ENCODE measurements at regions of chr12 and their contacts with region 1.

Region 1: DNA sequence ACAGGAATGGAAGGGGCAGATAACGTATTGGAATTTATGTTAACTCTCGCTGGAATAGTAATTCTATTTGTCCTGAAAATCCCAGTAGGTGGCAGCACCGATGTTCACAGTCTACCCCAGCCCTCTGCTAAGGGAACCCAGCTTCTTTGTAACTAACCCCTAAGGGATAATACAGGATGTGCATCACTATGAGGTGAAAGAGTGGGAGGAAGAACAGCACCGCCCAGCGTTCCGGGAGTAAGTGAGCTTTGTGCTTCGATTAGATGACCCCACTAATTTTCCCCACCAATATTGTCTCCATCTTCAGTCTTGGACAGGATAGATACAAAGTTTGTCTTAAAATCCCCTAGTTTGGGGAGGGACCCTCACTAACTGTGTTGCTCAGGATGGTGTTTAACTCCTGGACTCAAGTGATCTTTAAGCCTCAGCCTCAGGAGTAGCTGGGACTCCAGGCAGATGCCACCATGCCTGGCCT is 2.7 kb downstream of the SLC2A3 start:
- DNase-seq: peak; percentile 78
- H3K4me3 Mint-ChIP-seq: no peak overlapping the region
- H3K27ac Mint-ChIP-seq: no peak overlapping the region
- H3K4me1 Mint-ChIP-seq: no peaks in the 10 kb centered on the region
- H3K27me3 Mint-ChIP-seq: peaks cover 18% of the 10 kb centered on the region
- CTCF ChIP-seq: peak; percentile 19

Region 2: GRCh38 chr12:7628381-7628961 is 304.8 kb before region 1 on chr12:
- CTCF ChIA-PET with region 1: no interaction called
- intact Hi-C with region 1: no loop called
- DNase-seq: no peak
- H3K4me3 Mint-ChIP-seq: no peak overlapping the region
- H3K27ac Mint-ChIP-seq: no peak overlapping the region
- H3K4me1 Mint-ChIP-seq: no peaks in the 10 kb centered on the region
- H3K27me3 Mint-ChIP-seq: no peaks in the 10 kb centered on the region
- CTCF ChIP-seq: no peak

Region 3: DNA sequence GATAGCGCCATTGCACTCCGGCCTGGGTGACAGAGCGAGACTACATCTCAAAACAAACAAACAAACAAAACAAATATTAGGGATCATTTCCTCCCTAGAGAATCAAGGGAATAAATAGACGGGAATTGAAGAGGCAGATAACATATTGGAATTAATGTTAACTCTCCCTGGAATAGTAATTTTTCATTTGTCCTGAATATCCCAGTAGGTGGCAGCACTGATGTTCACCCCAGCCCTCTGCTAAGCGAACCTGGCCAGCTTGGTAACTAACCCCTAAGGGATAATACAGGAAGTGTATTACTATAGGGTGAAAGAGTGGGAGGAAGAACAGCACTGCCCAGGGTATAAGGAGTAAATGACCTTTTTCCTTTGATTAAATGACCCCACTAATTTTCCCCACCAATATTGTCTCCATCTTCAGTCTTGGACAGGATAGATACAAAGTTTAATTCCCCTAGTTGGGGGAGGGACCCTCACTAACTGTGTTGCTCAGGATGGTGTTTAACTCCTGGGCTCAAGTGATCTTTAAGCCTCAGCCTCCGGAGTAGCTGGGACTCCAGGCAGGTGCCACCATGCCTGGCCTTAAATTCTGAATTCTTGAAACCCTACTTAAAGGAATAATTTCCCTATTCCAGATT is 101.1 kb before region 1 on chr12:
- CTCF ChIA-PET with region 1: interaction called, 15 read pairs
- intact Hi-C with region 1: no loop called
- DNase-seq: peak; percentile 46
- H3K4me3 Mint-ChIP-seq: no peak overlapping the region
- H3K27ac Mint-ChIP-seq: no peak overlapping the region
- H3K4me1 Mint-ChIP-seq: no peaks in the 10 kb centered on the region
- H3K27me3 Mint-ChIP-seq: peaks cover 27% of the 10 kb centered on the region
- CTCF ChIP-seq: no peak

Region 4: GRCh38 chr12:7859552-7859951 is 73.7 kb before region 1 on chr12:
- CTCF ChIA-PET with region 1: interaction called, 34 read pairs
- intact Hi-C with region 1: loop called (anchors 2 kb)
- DNase-seq: no peak
- H3K4me3 Mint-ChIP-seq: no peak overlapping the region
- H3K27ac Mint-ChIP-seq: no peak overlapping the region
- H3K4me1 Mint-ChIP-seq: peaks cover 8% of the 10 kb centered on the region
- H3K27me3 Mint-ChIP-seq: peaks cover 37% of the 10 kb centered on the region
- CTCF ChIP-seq: no peak

Region 5: DNA sequence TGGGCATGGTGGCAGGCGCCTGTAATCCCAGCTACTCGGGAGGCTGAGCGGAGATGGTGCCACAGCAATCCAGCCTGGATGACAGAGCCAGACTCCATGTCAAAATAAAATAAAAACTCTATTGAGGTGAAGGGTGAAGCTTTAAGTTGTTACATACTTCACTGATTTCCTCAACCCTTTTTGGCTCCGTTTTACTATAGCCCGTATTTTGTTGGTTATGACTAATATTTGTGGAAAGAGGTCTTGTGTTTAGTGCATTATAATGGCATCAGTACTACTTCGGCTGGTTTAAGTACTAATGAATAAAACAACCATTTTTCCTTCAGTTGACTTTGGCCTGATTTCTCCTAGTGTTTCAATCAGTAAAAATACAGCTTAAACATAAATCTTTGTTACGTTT is 33.5 kb before region 1 on chr12:
- CTCF ChIA-PET with region 1: no interaction called
- intact Hi-C with region 1: loop called (anchors 5 kb)
- DNase-seq: no peak
- H3K4me3 Mint-ChIP-seq: no peak overlapping the region
- H3K27ac Mint-ChIP-seq: no peak overlapping the region
- H3K4me1 Mint-ChIP-seq: no peaks in the 10 kb centered on the region
- H3K27me3 Mint-ChIP-seq: no peaks in the 10 kb centered on the region
- CTCF ChIP-seq: no peak

Region 6: DNA sequence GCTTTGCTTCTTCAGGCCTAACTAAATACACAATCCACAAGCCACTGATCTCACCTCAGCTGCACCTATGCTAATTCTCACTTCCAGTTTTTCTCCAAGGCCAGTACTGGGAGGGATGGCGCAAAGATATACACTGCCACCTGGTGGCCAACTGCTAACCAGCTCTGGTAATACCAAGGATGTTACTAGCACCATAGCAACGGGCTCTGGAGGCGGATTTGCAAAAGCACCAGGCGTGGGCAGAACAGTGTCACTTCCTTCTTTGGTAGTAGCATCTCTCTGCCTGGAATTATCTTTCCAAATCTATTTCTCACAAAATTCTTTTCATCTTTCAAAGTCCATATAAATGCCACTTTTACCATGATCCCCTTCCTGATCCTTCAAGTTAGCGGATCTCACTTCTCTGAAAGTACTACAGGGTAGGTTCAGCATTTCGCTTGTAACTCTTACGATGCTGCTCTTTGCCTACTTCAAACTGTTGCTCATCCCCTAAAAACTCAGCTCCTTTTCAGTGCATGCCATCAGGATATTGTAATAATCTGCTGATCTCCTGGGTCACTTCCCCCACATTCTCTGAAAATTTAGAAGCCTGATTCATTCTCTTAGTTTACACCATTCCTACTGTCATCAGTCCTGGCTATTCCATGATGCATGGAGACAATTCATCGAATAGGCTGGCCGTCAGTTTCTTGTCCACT is 62.1 kb after region 1 on chr12:
- CTCF ChIA-PET with region 1: interaction called, 18 read pairs
- intact Hi-C with region 1: loop called (anchors 1 kb)
- DNase-seq: peak; percentile 66
- H3K4me3 Mint-ChIP-seq: no peak overlapping the region
- H3K27ac Mint-ChIP-seq: no peak overlapping the region
- H3K4me1 Mint-ChIP-seq: peaks cover under 1% of the 10 kb centered on the region
- H3K27me3 Mint-ChIP-seq: no peaks in the 10 kb centered on the region
- CTCF ChIP-seq: peak; percentile 60